Dorsolateral prefrontal cortex (tissue), 120 donors: ENCODE measurements at regions of chr3 and their contacts with region 1.

Region 1: DNA sequence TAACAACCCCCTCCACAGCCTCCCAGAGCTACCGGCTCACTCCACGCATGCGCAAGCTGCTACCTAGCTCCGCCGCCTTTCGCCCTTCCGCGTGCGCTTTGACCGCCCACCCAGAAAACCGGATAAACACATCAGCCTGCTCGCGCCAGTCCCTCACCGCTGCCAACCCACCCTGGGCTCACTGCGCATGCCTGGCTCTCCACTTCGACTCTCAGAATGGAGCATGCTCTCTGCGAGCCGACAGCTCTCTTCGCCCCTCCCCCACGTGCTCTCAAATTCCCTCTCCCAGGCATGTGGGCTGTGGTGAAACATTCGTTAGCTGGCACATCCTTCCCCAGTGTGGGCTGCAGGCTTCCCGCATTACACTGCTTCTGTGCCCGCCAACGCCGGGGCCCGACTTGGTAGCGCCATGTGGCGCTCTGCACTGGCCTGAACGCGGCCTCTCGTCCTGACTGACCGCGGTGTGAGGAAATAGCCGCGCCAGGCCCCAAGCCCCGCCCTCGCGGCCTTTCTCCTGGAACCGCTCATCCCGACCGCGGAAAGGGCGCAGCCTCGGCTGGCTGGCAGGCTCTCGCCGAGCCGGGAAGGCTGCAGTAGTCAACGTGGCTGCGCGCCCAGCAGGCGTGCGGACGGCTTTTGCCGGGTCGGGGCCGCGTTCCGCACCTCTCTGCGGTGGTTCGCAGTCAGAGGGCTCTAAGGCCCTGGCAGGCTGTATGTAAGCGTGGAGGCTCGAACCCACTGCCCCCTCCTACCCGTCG is 445 bp upstream of the MSL2 start:
- DNase-seq: peak; percentile 93 to 97 (median 95)
- H3K4me3 ChIP-seq: peak overlapping the region; percentile 66 to 98 (median 91)
- H3K27ac ChIP-seq: peak overlapping the region; percentile 91 to 100 (median 100)
- H3K27me3 ChIP-seq: no peaks in the 10 kb centered on the region
- CTCF ChIP-seq: peak in 17 of 56 donors; percentile 4 to 45 (median 19)

Region 2: DNA sequence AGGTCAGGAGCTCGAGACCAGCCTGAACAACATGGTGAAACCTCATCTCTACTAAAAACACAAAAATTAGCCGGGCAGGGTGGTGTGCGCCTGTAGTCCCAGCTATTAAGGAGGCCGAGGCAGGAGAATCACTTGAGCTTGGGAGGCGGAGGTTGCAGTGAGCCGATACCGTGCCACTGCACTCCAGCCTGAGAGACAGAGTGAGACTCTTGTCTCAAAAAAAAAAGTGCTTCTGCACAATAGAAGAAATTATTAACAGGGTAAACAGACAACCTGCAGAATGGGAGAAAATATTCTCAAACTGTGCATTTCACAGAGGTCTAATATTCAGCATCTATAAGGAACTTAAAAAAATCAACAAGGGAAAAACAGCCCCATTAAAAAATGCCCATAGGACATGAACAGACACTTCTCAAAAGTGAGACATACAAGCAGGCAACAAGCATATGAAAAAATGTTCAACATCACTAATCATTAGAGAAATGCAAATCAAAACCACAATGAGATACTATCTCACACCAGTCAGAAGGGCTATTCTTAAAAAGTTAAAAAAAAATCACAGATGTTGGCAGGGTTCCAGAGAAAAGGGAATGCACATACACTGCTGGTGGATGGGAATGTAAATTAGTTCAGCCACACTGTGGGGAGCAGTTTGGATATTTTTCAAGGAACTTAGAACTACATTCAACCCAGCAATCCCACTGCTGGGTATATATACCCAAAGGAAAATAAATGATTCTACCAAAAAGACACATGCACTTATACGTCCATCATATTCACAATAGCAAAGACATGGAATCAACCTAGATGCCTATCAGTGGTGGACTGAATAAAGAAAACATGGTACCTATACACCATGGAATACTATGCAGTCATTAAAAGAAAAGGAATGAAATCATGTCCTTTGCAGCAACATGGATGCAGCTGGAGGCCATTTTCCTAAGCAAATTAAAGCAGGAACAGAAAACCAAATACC is 75.9 kb before region 1 on chr3:
- intact Hi-C with region 1: no loop called
- DNase-seq: no peak
- H3K4me3 ChIP-seq: no peak overlapping the region
- H3K27ac ChIP-seq: no peak overlapping the region
- H3K27me3 ChIP-seq: no peaks in the 10 kb centered on the region
- CTCF ChIP-seq: no peak

Region 3: GRCh38 chr3:136149667-136150066 is 46.9 kb before region 1 on chr3:
- intact Hi-C with region 1: loop called in 1 of 2 experiments (anchors 5 kb)
- DNase-seq: no peak
- H3K4me3 ChIP-seq: no peak overlapping the region
- H3K27ac ChIP-seq: peak overlapping the region in 1 of 59 donors; percentile 23
- H3K27me3 ChIP-seq: no peaks in the 10 kb centered on the region
- CTCF ChIP-seq: no peak

Region 4: DNA sequence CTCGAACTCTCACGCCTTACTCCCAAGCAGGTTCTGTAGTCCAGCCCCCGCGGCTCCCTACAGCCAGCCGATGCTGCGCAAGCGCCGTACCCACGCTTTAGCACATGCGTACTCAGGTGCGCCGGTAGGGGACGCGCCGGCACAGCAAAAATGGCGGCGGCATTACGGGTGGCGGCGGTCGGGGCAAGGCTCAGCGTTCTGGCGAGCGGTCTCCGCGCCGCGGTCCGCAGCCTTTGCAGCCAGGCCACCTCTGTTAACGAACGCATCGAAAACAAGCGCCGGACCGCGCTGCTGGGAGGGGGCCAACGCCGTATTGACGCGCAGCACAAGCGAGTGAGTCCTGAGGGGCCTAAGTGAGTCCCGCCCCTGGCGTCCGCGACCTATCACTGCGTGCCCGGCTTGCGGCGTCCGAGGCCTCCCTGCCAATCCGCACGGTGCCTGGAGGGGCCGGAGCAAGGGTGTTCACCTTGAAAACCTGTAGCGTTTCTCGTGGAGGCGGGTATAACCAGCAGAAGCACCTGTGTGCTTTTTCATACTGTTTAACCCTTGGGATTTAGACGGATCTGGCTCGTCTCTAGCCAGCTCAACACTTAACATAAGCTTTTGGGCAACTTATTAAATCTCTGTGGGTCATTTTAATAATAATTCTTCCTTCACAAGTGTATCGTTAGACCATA is 53.8 kb after region 1 on chr3 and contains the start of gene PCCB:
- intact Hi-C with region 1: loop called (anchors 1 kb)
- DNase-seq: peak; percentile 84 to 94 (median 90)
- H3K4me3 ChIP-seq: peak within 1 kb of the TSS; percentile 42 to 93 (median 81)
- H3K27ac ChIP-seq: peak within 1 kb of the TSS; percentile 72 to 99 (median 95)
- H3K27me3 ChIP-seq: no peaks in the 10 kb centered on the region
- CTCF ChIP-seq: peak; percentile 58 to 94 (median 82)
- total RNA-seq, gene PCCB: 37.3 to 110 (median 59.5) TPM